Activated CD4-positive, alpha-beta T cell treated with anti-CD3 and anti-CD28 coated beads for 36 hours (primary cell): ENCODE measurements at regions of chr4 and their contacts with region 1.

Region 1: GRCh38 chr4:122857160-122857559 is 30.5 kb downstream of the FGF2 start:
- DNase-seq: no peak
- ATAC-seq: no peak
- H3K4me3 Mint-ChIP-seq: no peak overlapping the region
- H3K27ac Mint-ChIP-seq: no peak overlapping the region
- H3K4me1 Mint-ChIP-seq: no peaks in the 10 kb centered on the region
- H3K27me3 Mint-ChIP-seq: peaks cover 21% of the 10 kb centered on the region

Region 2: DNA sequence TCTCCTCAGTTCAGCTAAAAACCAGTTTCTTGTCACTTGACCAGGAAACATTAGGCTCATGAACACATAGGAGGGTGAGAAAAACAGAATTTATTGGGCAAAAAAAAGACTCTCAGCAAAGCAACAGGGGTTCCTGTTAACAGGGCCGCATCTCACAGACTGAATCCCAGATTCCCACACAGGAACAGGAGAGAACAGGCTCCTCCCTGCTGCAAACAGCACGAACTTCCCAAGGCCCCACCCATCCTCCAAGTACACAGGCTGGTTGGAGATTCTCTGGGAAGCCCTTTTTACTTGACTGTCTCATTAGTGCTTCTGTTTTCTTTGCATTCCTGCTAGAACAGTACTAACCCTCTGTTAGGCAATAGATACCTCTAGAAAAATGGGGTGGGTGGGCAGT is 183.9 kb before region 1 on chr4:
- CTCF ChIA-PET with region 1: no interaction called
- POLR2A ChIA-PET with region 1: no interaction called
- intact Hi-C with region 1: no loop called
- DNase-seq: no peak
- ATAC-seq: no peak
- H3K4me3 Mint-ChIP-seq: no peak overlapping the region
- H3K27ac Mint-ChIP-seq: peak overlapping the region; percentile 12
- H3K4me1 Mint-ChIP-seq: peaks cover 50% of the 10 kb centered on the region
- H3K27me3 Mint-ChIP-seq: peaks cover 11% of the 10 kb centered on the region

Region 3: GRCh38 chr4:122827879-122828601 is 29.1 kb before region 1 on chr4:
- CTCF ChIA-PET with region 1: interaction called, 3 read pairs
- POLR2A ChIA-PET with region 1: no interaction called
- intact Hi-C with region 1: loop called in 1 of 2 experiments (anchors 2 kb)
- DNase-seq: peak; percentile 70
- ATAC-seq: peak; percentile 89
- H3K4me3 Mint-ChIP-seq: peak overlapping the region; percentile 75
- H3K27ac Mint-ChIP-seq: peak overlapping the region; percentile 40
- H3K4me1 Mint-ChIP-seq: peaks cover 12% of the 10 kb centered on the region
- H3K27me3 Mint-ChIP-seq: peaks cover 70% of the 10 kb centered on the region

Region 4: DNA sequence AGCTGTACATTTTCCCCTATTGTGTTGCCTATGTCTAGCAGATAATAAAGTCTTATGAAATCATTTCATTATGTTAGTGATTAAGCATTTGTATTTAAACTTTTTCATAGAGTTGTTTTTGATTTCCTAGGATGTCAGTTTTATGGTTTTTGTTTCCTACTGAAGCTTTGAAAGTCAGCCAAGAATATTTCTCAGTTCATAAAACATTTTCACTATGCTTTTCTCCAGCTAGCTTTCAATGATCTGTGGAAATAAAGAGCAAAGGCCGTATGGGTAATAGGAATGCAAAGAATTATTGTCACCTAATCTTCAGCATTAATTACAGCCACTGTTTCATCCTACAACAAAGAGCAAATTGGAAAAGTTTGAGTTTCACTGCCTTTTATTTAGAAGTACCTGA is 210.9 kb after region 1 on chr4:
- CTCF ChIA-PET with region 1: no interaction called
- POLR2A ChIA-PET with region 1: no interaction called
- intact Hi-C with region 1: no loop called
- DNase-seq: no peak
- ATAC-seq: no peak
- H3K4me3 Mint-ChIP-seq: no peak overlapping the region
- H3K27ac Mint-ChIP-seq: no peak overlapping the region
- H3K4me1 Mint-ChIP-seq: no peaks in the 10 kb centered on the region
- H3K27me3 Mint-ChIP-seq: no peaks in the 10 kb centered on the region

Region 5: GRCh38 chr4:123114915-123115756 is 258.0 kb after region 1 on chr4:
- CTCF ChIA-PET with region 1: no interaction called
- POLR2A ChIA-PET with region 1: no interaction called
- intact Hi-C with region 1: no loop called
- DNase-seq: no peak
- ATAC-seq: no peak
- H3K4me3 Mint-ChIP-seq: no peak overlapping the region
- H3K27ac Mint-ChIP-seq: no peak overlapping the region
- H3K4me1 Mint-ChIP-seq: no peaks in the 10 kb centered on the region
- H3K27me3 Mint-ChIP-seq: no peaks in the 10 kb centered on the region